CD14-positive monocyte (primary cell): ENCODE measurements at regions of chr1 and their contacts with region 1.

Region 1: DNA sequence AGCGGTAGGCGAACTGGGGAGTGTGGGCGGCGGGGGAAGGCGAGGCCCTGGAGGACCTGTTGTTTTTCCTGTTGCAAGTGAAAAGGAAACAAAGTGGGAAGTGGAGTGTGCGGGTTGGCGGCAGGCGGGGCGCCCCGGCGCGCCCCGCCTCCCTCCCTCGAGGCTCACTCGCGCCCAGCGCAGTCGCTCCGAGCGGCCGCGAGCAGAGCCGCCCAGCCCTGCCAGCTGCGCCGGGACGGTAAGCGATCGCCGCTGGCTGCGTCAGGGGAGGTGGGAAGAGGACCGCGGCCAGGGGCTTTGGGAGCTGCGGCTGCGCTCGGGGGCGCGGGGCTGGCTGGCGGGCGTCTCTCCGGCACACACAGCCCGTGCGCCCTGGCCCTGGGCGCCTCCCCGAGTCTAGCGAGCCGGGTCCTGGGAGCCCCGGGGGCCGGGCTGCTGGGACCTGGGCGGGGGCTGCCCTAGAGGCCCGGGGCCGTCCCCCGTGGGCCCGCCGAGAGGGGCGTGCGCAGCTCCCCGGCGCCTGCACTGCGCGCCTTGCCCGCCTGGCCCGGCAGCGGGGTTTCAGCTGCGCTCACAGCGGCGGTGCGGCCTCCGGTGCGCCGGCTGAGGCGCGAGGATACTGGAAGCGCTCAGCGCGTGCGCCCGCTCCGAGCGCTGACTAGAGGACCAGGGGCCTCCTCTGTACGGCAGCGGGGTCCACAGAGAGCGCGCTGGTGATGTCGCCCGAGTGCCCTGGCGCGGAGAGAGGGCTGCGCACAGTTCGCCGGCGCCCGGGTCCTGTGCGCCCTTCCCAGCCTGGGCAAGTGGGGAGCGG is at the start of gene PIK3CD:
- DNase-seq: peak in 2 of 3 donors; percentile 46 to 54
- H3K4me3 ChIP-seq: peak within 1 kb of the TSS; percentile 67 to 96 (median 92)
- H3K4me3 Mint-ChIP-seq: peak within 1 kb of the TSS; percentile 97 to 99
- H3K27ac ChIP-seq: peak within 1 kb of the TSS; percentile 81
- H3K27ac Mint-ChIP-seq: peak within 1 kb of the TSS; percentile 90 to 98 (median 96)
- H3K4me1 ChIP-seq: peaks cover 55 to 63% of the 10 kb centered on the region in 2 donors
- H3K4me1 Mint-ChIP-seq: peaks cover 61% of the 10 kb centered on the region
- H3K27me3 ChIP-seq: no peaks in the 10 kb centered on the region
- H3K27me3 Mint-ChIP-seq: peaks cover 0 to 2% (median 0%) of the 10 kb centered on the region in 3 donors
- CTCF ChIP-seq: no peak
- polyA plus RNA-seq, gene PIK3CD: 33.2 to 120 (median 52.2) TPM

Region 2: DNA sequence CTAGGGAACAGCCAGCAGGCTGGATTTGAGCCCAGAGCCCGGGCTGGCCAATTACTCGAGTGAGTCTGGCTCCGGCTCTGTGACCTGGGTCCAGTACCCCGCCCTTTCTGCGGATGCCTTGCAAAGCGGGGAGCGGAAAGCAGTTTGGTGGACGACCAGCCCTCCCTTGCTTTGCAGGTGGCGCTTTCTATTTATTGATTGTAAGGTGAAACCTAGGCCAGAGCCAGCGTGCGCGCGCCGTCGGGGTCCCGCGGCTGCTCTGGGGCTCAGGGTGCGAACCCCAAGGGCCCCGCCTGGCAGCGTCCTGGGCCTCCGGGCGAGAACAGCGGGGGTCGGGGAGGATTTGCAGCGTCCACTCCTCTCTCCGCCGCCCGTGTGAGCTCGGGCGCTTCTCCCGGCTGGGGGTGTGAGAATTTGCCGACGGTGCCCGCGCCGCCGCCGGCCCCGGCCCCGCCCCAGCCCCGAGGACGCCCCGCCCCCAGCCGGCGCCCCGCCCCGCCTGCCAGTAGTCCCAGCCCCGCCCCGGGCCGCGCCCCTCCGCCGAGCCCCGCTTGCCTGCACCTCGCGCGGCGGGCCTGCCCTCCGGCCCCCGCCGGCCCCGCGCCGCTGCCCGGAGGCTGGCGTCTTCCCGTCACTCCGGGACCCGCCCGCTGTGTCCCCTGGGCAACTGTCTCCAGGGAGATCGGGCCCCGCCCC is 37.4 kb after region 1 on chr1:
- intact Hi-C with region 1: loop called (anchors 5 kb)
- DNase-seq: peak; percentile 43 to 64 (median 61)
- H3K4me3 ChIP-seq: peak overlapping the region; percentile 33 to 75 (median 35)
- H3K4me3 Mint-ChIP-seq: peak overlapping the region; percentile 72 to 84
- H3K27ac ChIP-seq: peak overlapping the region in 1 of 2 donors; percentile 48
- H3K27ac Mint-ChIP-seq: peak overlapping the region in 3 of 7 donors; percentile 6 to 41 (median 32)
- H3K4me1 ChIP-seq: peaks cover 66 to 76% of the 10 kb centered on the region in 2 donors
- H3K4me1 Mint-ChIP-seq: peaks cover 72% of the 10 kb centered on the region
- H3K27me3 ChIP-seq: no peaks in the 10 kb centered on the region
- H3K27me3 Mint-ChIP-seq: peaks cover 0 to 3% (median 0%) of the 10 kb centered on the region in 3 donors
- CTCF ChIP-seq: no peak

Region 3: GRCh38 chr1:9717193-9718005 is 65.6 kb after region 1 on chr1:
- intact Hi-C with region 1: loop called (anchors 5 kb)
- DNase-seq: peak; percentile 47 to 64 (median 55)
- H3K4me3 ChIP-seq: no peak overlapping the region
- H3K4me3 Mint-ChIP-seq: peak overlapping the region in 1 of 2 donors; percentile 31
- H3K27ac ChIP-seq: peak overlapping the region; percentile 39 to 73
- H3K27ac Mint-ChIP-seq: peak overlapping the region; percentile 76 to 91 (median 84)
- H3K4me1 ChIP-seq: peaks cover 32 to 40% of the 10 kb centered on the region in 2 donors
- H3K4me1 Mint-ChIP-seq: peaks cover 24% of the 10 kb centered on the region
- H3K27me3 ChIP-seq: no peaks in the 10 kb centered on the region
- H3K27me3 Mint-ChIP-seq: no peaks in the 10 kb centered on the region
- CTCF ChIP-seq: no peak